ENCODE measurements at regions of chr7 and their contacts with region 1.

Region 1: GRCh38 chr7:42337225-42337905 is 100.4 kb upstream of the GLI3 start:
- DNase-seq: no peak
- H3K4me3 ChIP-seq: no peak overlapping the region
- H3K27ac ChIP-seq: no peak overlapping the region
- H3K4me1 ChIP-seq: no peaks in the 10 kb centered on the region
- H3K27me3 ChIP-seq: peaks cover 38% of the 10 kb centered on the region
- CTCF ChIP-seq: no peak

Region 2: DNA sequence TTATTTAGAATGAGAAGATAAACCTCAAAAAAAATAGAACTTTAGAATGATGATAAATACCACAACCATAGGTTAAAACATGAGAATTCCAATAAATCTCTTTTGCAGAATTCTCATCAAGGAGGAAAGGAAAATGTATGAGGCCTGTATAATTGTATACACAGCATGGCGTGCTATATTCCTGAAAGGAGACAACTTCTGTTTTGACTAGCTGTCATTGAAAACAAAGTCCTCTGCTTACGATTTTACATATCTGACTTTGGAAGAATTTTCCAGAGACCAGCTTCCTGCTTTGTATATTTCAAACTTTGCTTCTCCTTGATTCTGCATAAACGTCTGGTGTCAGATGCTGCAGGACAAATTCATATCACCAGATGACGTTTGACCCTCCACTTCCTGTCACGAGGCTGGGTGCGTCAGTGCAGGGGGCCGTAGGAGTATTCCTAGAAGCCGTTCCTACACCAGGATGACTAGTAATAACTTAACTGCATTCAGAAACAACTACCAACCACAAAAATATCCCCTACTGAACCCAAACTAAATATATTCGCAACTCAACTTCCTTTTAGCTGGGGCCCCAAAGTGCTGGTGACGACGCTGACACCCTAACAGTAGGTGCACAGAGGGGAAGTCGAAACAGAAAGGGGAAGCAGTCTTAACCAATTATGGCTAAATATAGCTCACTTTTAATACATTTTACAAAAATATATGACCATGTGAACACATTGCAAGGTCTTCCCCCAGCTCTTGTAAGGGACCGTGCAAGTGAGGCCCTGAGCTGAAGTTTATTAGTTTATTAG is 455.8 kb before region 1 on chr7:
- CTCF ChIA-PET with region 1: no interaction called
- POLR2A ChIA-PET with region 1: no interaction called
- intact Hi-C with region 1: no loop called
- DNase-seq: no peak
- H3K4me3 ChIP-seq: no peak overlapping the region
- H3K27ac ChIP-seq: no peak overlapping the region
- H3K4me1 ChIP-seq: no peaks in the 10 kb centered on the region
- H3K27me3 ChIP-seq: no peaks in the 10 kb centered on the region
- CTCF ChIP-seq: no peak

Region 3: GRCh38 chr7:42071372-42072261 is 265.7 kb before region 1 on chr7:
- CTCF ChIA-PET with region 1: no interaction called
- POLR2A ChIA-PET with region 1: no interaction called
- intact Hi-C with region 1: no loop called
- DNase-seq: no peak
- H3K4me3 ChIP-seq: no peak overlapping the region
- H3K27ac ChIP-seq: no peak overlapping the region
- H3K4me1 ChIP-seq: no peaks in the 10 kb centered on the region
- H3K27me3 ChIP-seq: peaks cover 72% of the 10 kb centered on the region
- CTCF ChIP-seq: no peak

Region 4: DNA sequence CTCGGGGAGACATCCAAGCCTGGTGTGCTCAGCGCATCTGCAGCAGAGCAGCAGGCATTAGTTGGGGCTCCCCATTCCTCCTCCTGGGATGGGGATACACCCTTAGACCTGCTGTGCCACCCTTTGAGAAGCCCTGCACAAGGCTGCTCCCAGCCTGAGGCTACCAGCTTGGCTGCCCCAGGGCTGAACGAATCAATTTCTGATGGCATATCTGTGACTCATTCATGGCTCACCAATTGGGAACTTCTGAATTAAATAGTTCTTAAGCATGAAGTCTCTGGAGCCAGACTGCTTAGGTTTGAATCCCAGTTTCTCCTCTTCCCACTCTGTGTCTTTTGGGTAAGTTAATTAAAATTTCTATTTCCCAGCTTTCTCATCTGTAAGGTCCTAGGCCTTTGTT is 84.0 kb before region 1 on chr7:
- CTCF ChIA-PET with region 1: no interaction called
- POLR2A ChIA-PET with region 1: interaction called, 15 read pairs
- intact Hi-C with region 1: no loop called
- DNase-seq: no peak
- H3K4me3 ChIP-seq: no peak overlapping the region
- H3K27ac ChIP-seq: no peak overlapping the region
- H3K4me1 ChIP-seq: no peaks in the 10 kb centered on the region
- H3K27me3 ChIP-seq: peaks cover 15% of the 10 kb centered on the region
- CTCF ChIP-seq: no peak

Region 5: DNA sequence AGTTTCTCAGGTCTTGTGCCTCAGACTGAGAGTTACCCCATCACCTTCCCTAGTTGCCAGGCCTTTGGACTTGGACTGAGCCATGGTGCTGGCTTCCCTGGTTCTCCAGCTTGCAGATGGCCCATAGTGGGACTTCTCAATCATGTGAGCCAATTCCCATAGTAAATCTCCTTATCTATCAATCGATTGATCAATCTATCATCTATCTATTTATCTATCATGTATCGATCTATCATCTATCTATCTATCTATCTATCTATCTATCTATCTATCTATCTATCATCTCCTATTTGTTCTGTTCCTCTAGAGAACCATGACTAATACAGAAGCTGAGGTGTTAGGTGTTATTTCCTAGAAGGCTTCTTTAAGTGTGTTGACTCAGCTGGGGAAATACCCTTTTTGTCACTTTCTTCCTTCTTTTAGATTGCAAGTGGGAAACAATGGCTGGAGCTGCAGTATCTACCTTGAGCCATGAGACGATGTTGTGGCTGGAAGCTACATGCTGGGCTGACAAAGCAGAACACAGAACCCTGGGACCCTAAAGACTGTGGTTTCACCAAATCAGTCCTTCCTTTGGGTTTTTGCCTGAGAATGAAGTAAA is 134.3 kb after region 1 on chr7:
- CTCF ChIA-PET with region 1: no interaction called
- POLR2A ChIA-PET with region 1: no interaction called
- intact Hi-C with region 1: no loop called
- DNase-seq: no peak
- H3K4me3 ChIP-seq: no peak overlapping the region
- H3K27ac ChIP-seq: no peak overlapping the region
- H3K4me1 ChIP-seq: no peaks in the 10 kb centered on the region
- H3K27me3 ChIP-seq: peaks cover 67% of the 10 kb centered on the region
- CTCF ChIP-seq: no peak

Measured in PC-9 (cell line).